ENCODE measurements at regions of chr19 and their contacts with region 1.

Region 1: GRCh38 chr19:58380722-58381466 is at the start of gene ZNF837:
- DNase-seq: peak; percentile 96 to 100 (median 99)
- H3K4me3 ChIP-seq: peak within 1 kb of the TSS; percentile 62 to 99 (median 82)
- H3K27ac ChIP-seq: peak within 1 kb of the TSS; percentile 84 to 99 (median 96)
- H3K27me3 ChIP-seq: no peaks in the 10 kb centered on the region
- CTCF ChIP-seq: peak in 22 of 56 donors; percentile 4 to 55 (median 18)
- total RNA-seq, gene ZNF837: 0.27 to 2.9 (median 0.98) TPM in 113 of 120 experiments, not detected in the others

Region 2: GRCh38 chr19:58362272-58362994 is 18.5 kb before region 1 on chr19 and contains the start of gene ZNF497:
- intact Hi-C with region 1: loop called in 1 of 2 experiments (anchors 2 kb)
- DNase-seq: peak; percentile 94 to 98 (median 97)
- H3K4me3 ChIP-seq: peak within 1 kb of the TSS; percentile 59 to 100 (median 84)
- H3K27ac ChIP-seq: peak within 1 kb of the TSS; percentile 51 to 98 (median 92)
- H3K27me3 ChIP-seq: no peaks in the 10 kb centered on the region
- CTCF ChIP-seq: peak in 48 of 56 donors; percentile 22 to 70 (median 52)
- total RNA-seq, gene ZNF497: 1.3 to 6.9 (median 3.7) TPM

Measured in dorsolateral prefrontal cortex (tissue), 120 donors.